ENCODE measurements at regions of chr10 and their contacts with region 1.

Region 1: DNA sequence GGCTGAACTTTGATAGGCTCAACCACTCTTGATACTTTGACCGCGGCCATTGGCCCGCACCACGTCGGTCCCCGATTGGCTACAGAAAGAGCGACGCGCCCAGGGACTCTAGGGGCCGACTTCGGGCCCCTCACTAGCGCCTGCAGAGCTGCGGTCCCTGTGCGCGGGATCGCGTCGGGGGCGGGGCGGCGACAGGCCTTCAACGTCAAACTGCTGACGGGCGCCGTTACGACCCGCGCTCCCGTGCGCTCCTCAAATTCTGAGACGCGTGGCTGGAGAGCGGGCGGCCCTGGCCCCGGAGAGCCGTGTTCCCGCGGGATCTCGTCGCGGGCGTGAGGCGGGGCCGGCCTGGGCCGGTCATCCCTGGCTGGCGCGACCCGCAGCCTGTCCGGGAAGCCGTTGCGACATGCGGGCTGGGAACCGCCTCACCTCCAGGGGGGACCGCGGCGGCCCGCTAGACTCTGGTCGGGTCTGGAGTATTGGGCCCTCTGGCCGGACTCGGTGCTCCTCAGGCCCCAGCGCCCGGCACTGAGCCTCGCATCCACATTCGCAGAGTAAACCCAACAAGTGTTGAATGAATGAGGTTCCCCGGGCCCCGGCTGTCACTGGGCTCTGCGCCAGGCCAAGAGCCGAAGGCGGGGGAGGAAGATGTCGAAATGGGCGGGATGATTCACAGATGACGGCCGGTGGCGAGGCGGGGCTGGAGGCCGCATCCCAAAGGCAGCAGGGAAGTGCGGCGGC is 644 bp upstream of the SLC25A28 start:
- H3K4me3 ChIP-seq: peak overlapping the region; percentile 59
- H3K27ac ChIP-seq: peak overlapping the region; percentile 99
- H3K4me1 ChIP-seq: 0 out of 2 replicates have a peak, but pooled peaks cover 7% of the 10 kb centered on the region
- CTCF ChIP-seq: peak; percentile 60; the same call in 1 of the 2 replicates

Region 2: DNA sequence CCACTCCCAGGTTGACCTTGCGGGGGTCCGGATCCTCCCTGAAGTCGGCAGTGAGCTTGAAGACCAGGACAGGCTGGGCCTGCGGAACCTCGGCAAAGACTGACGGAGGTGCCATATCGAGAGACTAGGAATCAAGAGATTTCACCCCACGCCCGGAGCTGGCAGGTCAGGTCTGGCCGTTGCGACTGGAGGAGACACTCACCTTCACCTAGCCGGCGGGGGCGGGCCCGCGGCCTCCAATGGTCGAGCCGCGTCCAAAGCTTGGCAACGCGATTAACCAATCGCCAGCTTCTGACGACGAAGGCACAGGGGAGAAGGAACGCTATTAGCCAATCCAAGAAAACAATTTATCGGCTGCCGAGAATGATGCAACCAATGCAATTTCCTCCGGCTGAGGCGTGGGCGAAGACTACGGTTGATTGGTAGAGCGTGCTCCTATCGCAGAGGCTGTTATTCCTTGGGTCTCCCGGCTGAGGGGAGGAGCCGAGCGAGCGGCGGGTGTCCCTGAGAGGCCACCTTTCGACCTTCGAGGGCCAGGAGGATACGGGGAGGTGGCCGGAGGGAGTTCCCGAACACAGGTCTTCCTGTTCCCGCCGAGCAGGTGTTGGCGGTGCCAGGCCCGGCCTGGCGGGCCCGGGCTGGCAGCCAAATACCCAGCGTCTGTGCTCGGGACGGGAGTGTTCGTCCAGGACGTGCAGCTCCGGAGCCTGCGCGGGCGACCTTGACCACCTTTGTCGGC is 190.3 kb before region 1 on chr10 and contains the start of gene GOT1:
- CTCF ChIA-PET with region 1: interaction called, 104 read pairs
- POLR2A ChIA-PET with region 1: interaction called, 20 read pairs
- H3K4me3 ChIP-seq: peak within 1 kb of the TSS; percentile 87
- H3K27ac ChIP-seq: peak within 1 kb of the TSS; percentile 69
- H3K4me1 ChIP-seq: peaks cover 9% of the 10 kb centered on the region; the same call in 1 of the 2 replicates
- CTCF ChIP-seq: no peak; the same call in 1 of the 2 replicates

Region 3: DNA sequence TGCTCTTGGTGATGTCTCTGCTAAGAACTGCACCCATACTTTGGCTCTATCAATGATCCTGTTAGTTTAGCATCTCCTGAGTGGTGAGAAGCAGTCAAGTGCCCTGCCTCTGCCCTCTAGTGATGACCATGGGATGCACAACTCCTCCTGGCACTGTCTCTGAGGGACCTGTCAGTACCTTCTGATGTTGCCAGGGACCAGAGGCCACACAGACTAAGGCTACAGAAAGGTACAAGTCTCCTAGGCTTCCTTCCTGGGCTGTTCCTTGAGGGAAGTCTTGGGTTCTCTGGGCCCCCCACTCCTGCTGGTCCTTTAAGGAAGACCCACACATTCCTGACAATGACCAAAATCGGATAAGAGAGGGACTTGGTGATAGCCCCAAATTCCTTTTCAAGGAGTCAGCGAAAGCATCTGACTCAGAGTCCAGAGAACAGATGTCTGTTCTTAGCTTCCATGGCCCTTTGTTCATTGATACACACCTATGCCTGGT is 72.8 kb before region 1 on chr10:
- CTCF ChIA-PET with region 1: no interaction called
- POLR2A ChIA-PET with region 1: no interaction called
- H3K4me3 ChIP-seq: no peak overlapping the region
- H3K27ac ChIP-seq: no peak overlapping the region
- H3K4me1 ChIP-seq: peaks cover 14% of the 10 kb centered on the region
- CTCF ChIP-seq: peak; percentile 62; the same call in 1 of the 2 replicates